Lower leg skin (tissue), 4 donors: ENCODE measurements at regions of chr4 and their contacts with region 1.

Region 1: DNA sequence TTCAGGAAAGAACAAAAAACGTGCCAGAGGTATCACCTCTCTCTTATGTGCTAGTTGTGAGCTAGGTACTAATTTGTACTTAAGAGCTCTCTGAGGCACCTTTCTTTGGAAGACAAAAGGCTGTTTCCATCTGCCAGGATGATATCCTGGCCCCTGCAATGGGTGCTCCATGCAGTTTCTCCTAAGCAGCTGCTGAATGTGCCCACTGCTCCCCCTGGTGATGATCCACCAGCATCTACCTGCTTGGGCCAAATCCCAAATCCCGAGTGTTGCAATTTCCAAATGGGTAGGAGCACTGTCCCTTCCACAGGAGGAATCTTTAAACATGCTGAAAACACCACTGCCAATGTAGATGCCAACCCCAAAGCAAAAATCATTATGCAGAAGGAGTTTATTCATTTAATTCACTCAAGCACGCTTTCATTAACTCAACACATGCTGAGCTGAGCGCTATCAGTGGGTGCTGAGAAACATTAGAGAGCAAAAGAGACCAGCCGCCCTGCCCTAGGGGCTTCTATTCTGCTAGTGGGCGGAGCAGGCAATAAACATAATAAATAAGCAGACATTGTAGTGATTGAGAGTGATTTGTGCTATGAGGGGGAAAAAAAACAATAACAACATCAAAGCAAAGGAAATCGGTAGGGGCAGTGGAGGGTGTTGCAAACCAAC is 69.6 kb upstream of the C4orf50 start:
- DNase-seq: peak in 1 of 2 donors; percentile 56
- H3K4me3 ChIP-seq: no peak overlapping the region
- CTCF ChIP-seq: no peak
- POLR2A ChIP-seq: no peak

Region 2: DNA sequence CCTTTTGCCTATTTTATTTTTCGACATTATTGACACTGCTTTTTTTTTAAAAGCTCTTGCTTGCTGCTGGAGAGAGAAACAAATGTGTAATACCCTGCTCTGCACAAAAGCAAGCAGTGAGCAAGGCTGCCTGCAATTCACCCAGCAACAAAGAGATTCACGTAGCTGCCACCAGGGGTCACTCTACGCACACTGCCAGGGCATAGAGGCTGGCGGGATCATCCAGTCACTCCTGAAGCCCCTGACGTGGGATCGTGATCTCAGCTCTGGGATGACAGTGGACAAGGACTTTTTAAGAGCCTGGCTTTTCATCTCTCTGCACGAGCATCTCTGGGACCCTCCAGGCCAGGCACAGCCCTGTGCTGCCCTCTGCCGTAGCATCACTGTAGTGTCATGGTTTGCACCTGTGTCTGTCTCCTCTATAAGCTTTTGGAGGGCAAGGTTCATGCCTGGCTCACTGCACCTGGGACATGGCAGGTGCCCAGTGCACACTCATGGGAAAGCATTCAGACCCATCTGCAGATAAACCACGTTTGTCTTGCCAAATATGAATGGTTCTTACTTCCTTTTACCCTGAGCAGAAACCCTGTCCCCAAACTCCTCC is 89.4 kb before region 1 on chr4:
- intact Hi-C with region 1: loop called (anchors 10 kb)
- DNase-seq: peak in 1 of 2 donors; percentile 84
- H3K4me3 ChIP-seq: no peak overlapping the region
- CTCF ChIP-seq: no peak
- POLR2A ChIP-seq: no peak